GM12878 (cell line): ENCODE measurements at regions of chr2 and their contacts with region 1.

Region 1: GRCh38 chr2:198788676-198789075 is 669.1 kb downstream of the SATB2 start:
- DNase-seq: no peak
- ATAC-seq: no peak
- H3K4me3 ChIP-seq: no peak overlapping the region
- H3K27ac ChIP-seq: no peak overlapping the region
- H3K4me1 ChIP-seq: no peaks in the 10 kb centered on the region
- H3K27me3 ChIP-seq: no peaks in the 10 kb centered on the region
- CTCF ChIP-seq: no peak
- EP300 ChIP-seq: no peak
- POLR2A ChIP-seq: no peak
- RAD21 ChIP-seq: no peak

Region 2: DNA sequence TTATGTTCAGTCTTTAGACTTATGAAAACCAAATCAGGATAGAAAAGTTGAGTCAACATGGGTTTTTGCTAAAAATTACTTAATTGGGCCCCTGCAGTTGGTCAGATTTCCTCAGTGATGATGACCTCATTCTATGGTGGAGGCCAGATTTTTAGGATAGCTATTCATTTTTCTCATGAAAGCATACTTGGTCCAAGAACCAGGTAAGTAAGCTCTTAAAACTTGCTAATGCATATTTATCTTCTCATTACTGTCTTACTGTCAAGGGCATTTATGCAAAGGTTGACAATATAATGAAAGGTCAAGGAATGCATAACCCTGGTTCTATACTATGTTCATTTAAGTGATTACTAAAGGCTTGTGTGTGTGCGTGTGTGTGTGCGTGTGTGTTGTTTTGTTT is 18.5 kb after region 1 on chr2:
- CTCF ChIA-PET with region 1: interaction called, 3 read pairs
- POLR2A ChIA-PET with region 1: interaction called, 3 read pairs
- RAD21 ChIA-PET with region 1: interaction called, 3 read pairs
- SMC1A ChIA-PET with region 1: interaction called, 54 read pairs
- in situ Hi-C with region 1: no loop called
- intact Hi-C with region 1: no loop called
- DNase-seq: no peak
- ATAC-seq: no peak
- H3K4me3 ChIP-seq: no peak overlapping the region
- H3K27ac ChIP-seq: no peak overlapping the region
- H3K4me1 ChIP-seq: no peaks in the 10 kb centered on the region
- H3K27me3 ChIP-seq: no peaks in the 10 kb centered on the region
- CTCF ChIP-seq: no peak
- EP300 ChIP-seq: no peak
- POLR2A ChIP-seq: no peak
- RAD21 ChIP-seq: no peak